Activated CD4-positive, alpha-beta T cell treated with anti-CD3 and anti-CD28 coated beads for 36 hours (primary cell): ENCODE measurements at regions of chr1 and their contacts with region 1.

Region 1: GRCh38 chr1:10430216-10431069 is at the start of gene CENPS:
- DNase-seq: peak; percentile 91
- ATAC-seq: peak; percentile 83
- H3K4me3 Mint-ChIP-seq: peak within 1 kb of the TSS; percentile 76
- H3K27ac Mint-ChIP-seq: peak within 1 kb of the TSS; percentile 92
- H3K4me1 Mint-ChIP-seq: peaks cover 22% of the 10 kb centered on the region
- H3K27me3 Mint-ChIP-seq: no peaks in the 10 kb centered on the region
- total RNA-seq, gene CENPS: 18.1 to 22.8 TPM

Region 2: DNA sequence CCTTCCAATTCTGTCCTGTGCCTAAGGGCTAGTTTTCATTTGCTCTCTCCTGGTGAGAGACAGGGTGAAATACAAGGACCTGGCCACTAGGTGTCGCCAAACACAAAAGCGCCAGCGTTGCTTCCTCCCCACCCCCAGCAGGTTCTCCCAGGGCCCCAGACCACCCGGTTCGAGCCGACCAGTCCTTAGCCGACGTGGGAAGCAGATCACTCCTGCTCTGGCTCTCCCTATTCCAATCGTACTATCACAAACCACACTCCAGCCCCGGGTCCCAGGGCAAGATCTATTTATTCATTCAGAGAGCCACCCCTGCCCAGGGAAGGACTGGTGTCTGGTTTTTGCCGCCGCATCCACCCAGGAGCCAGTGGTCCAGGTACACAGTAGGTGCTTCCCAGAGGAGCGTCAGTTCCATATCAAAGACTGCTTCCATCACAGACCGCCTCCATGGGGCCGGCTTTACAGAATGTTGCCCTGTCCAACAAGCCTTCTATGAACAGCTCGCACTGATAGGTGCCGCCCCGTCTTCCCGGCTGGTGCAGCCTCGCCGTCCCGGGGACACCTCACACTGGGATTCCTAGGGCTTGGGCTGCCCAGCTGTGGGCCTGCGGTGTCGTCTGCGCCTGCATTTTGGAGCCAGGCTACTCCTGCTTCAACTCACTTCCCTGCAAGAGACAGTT is 555.3 kb before region 1 on chr1:
- CTCF ChIA-PET with region 1: interaction called, 3 read pairs
- POLR2A ChIA-PET with region 1: no interaction called
- intact Hi-C with region 1: loop called (anchors 1 kb)
- DNase-seq: peak; percentile 86
- ATAC-seq: peak; percentile 96
- H3K4me3 Mint-ChIP-seq: no peak overlapping the region
- H3K27ac Mint-ChIP-seq: no peak overlapping the region
- H3K4me1 Mint-ChIP-seq: peaks cover 3% of the 10 kb centered on the region
- H3K27me3 Mint-ChIP-seq: no peaks in the 10 kb centered on the region

Region 3: DNA sequence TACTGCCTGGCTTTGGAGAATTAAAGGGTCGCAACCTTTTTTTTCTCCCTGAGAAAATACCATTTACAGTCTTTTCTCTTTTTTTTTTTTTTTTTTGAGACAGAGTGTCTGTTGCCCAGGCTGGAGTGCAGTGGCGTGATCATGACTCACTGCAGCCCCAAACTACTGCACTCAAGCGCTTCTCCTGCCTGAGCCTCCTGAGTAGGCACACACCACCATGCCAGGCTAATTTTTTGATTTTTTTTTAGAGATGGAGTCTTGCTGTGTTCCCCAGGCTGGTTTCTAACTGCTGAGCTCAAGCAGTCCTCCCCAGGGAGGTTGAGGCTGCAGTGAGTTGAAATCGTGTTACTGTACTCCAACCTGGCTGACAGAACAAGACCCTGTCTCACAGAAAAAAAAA is 373.1 kb before region 1 on chr1:
- CTCF ChIA-PET with region 1: no interaction called
- POLR2A ChIA-PET with region 1: no interaction called
- intact Hi-C with region 1: no loop called
- DNase-seq: no peak
- ATAC-seq: no peak
- H3K4me3 Mint-ChIP-seq: no peak overlapping the region
- H3K27ac Mint-ChIP-seq: no peak overlapping the region
- H3K4me1 Mint-ChIP-seq: peaks cover 4% of the 10 kb centered on the region
- H3K27me3 Mint-ChIP-seq: no peaks in the 10 kb centered on the region

Region 4: DNA sequence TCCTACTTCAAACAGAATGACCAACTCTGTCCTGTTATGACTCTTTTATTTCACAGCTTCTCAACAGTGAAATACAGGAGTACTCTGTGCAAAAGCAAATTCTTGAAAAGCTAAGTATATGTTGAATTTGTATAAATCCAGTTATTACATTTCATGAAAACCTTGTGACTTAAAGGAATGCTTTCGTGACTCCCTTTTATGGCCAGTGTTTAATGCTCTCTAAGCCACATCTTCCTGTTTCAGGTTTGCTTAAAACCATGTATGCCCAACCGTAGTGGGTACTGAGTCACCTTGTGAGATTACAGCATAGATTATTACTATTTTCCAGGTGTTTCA is 260.2 kb before region 1 on chr1:
- CTCF ChIA-PET with region 1: no interaction called
- POLR2A ChIA-PET with region 1: no interaction called
- intact Hi-C with region 1: loop called in 1 of 2 experiments (anchors 1 kb)
- DNase-seq: peak; percentile 48
- ATAC-seq: peak; percentile 89
- H3K4me3 Mint-ChIP-seq: peak overlapping the region; percentile 31
- H3K27ac Mint-ChIP-seq: peak overlapping the region; percentile 93
- H3K4me1 Mint-ChIP-seq: peaks cover 46% of the 10 kb centered on the region
- H3K27me3 Mint-ChIP-seq: no peaks in the 10 kb centered on the region

Region 5: GRCh38 chr1:10378081-10378841 is 52.2 kb before region 1 on chr1:
- CTCF ChIA-PET with region 1: interaction called, 6 read pairs
- POLR2A ChIA-PET with region 1: no interaction called
- intact Hi-C with region 1: loop called (anchors 1 kb)
- DNase-seq: no peak
- ATAC-seq: no peak
- H3K4me3 Mint-ChIP-seq: no peak overlapping the region
- H3K27ac Mint-ChIP-seq: no peak overlapping the region
- H3K4me1 Mint-ChIP-seq: no peaks in the 10 kb centered on the region
- H3K27me3 Mint-ChIP-seq: no peaks in the 10 kb centered on the region

Region 6: DNA sequence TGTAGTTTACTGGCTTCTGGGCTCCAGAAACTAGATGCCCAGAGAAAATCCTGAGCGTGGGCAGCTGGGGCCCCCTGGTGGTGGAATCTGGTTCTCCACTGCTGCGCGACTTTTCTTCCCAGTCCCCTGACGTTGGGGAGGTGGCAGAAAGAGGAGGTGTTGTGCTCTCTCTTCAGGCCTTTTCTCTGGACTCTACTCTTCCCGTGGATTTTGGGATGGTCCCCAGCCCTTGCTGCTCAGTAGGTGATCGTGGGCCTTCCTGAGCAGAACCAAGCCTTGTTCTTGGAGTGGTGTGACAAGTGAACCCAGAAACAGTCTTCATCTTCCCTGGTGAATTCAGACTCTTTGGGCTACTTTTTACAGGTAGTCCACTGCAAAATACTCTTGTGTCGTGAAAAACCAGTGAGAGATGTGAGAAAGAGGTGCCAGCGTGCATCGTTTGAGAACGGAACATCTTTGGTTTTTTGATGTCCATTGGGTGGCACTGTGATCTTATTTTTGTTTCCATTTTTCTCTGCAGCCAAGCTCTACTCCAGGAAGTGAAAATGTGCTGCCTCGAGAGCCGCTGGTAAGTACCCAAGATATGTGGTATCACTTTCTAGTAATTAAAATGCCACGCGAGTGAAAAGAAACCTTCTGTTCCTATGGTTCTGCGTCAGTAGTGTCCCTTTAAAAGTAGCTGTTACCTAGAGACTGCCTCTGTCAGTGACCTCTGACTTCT is 64.5 kb after region 1 on chr1:
- CTCF ChIA-PET with region 1: interaction called, 36 read pairs
- POLR2A ChIA-PET with region 1: no interaction called
- intact Hi-C with region 1: loop called (anchors 1 kb)
- DNase-seq: peak; percentile 90
- ATAC-seq: peak; percentile 87
- H3K4me3 Mint-ChIP-seq: peak overlapping the region; percentile 72
- H3K27ac Mint-ChIP-seq: peak overlapping the region; percentile 91
- H3K4me1 Mint-ChIP-seq: peaks cover 49% of the 10 kb centered on the region
- H3K27me3 Mint-ChIP-seq: no peaks in the 10 kb centered on the region

Region 7: GRCh38 chr1:10679496-10680220 is 249.2 kb after region 1 on chr1:
- CTCF ChIA-PET with region 1: no interaction called
- POLR2A ChIA-PET with region 1: no interaction called
- intact Hi-C with region 1: no loop called
- DNase-seq: peak; percentile 29
- ATAC-seq: peak; percentile 55
- H3K4me3 Mint-ChIP-seq: no peak overlapping the region
- H3K27ac Mint-ChIP-seq: no peak overlapping the region
- H3K4me1 Mint-ChIP-seq: no peaks in the 10 kb centered on the region
- H3K27me3 Mint-ChIP-seq: no peaks in the 10 kb centered on the region

Region 8: GRCh38 chr1:10765734-10766478 is 335.5 kb after region 1 on chr1:
- CTCF ChIA-PET with region 1: no interaction called
- POLR2A ChIA-PET with region 1: no interaction called
- intact Hi-C with region 1: no loop called
- DNase-seq: no peak
- ATAC-seq: no peak
- H3K4me3 Mint-ChIP-seq: no peak overlapping the region
- H3K27ac Mint-ChIP-seq: no peak overlapping the region
- H3K4me1 Mint-ChIP-seq: no peaks in the 10 kb centered on the region
- H3K27me3 Mint-ChIP-seq: no peaks in the 10 kb centered on the region

Region 9: GRCh38 chr1:10941891-10942541 is 511.6 kb after region 1 on chr1:
- CTCF ChIA-PET with region 1: no interaction called
- POLR2A ChIA-PET with region 1: no interaction called
- intact Hi-C with region 1: loop called in 1 of 2 experiments (anchors 2 kb)
- DNase-seq: peak; percentile 77
- ATAC-seq: no peak
- H3K4me3 Mint-ChIP-seq: no peak overlapping the region
- H3K27ac Mint-ChIP-seq: no peak overlapping the region
- H3K4me1 Mint-ChIP-seq: peaks cover 34% of the 10 kb centered on the region
- H3K27me3 Mint-ChIP-seq: peaks cover 53% of the 10 kb centered on the region